CD8-positive, alpha-beta T cell (primary cell): ENCODE measurements at regions of chr14 and their contacts with region 1.

Region 1: GRCh38 chr14:50619556-50620141 is 48.5 kb downstream of the SAV1 start:
- DNase-seq: peak in 2 of 9 experiments; percentile 21 to 39
- ATAC-seq: no peak
- H3K4me3 ChIP-seq: no peak overlapping the region
- H3K4me3 Mint-ChIP-seq: no peak overlapping the region
- H3K27ac ChIP-seq: no peak overlapping the region
- H3K27ac Mint-ChIP-seq: no peak overlapping the region
- H3K4me1 ChIP-seq: no peaks in the 10 kb centered on the region
- H3K4me1 Mint-ChIP-seq: no peaks in the 10 kb centered on the region
- H3K27me3 ChIP-seq: no peaks in the 10 kb centered on the region
- H3K27me3 Mint-ChIP-seq: no peaks in the 10 kb centered on the region
- CTCF ChIP-seq: no peak

Region 2: GRCh38 chr14:50635141-50635540 is 15.5 kb after region 1 on chr14:
- CTCF ChIA-PET with region 1: no interaction called
- POLR2A ChIA-PET with region 1: no interaction called
- intact Hi-C with region 1: no loop called
- DNase-seq: no peak
- ATAC-seq: no peak
- H3K4me3 ChIP-seq: no peak overlapping the region
- H3K4me3 Mint-ChIP-seq: no peak overlapping the region
- H3K27ac ChIP-seq: no peak overlapping the region
- H3K27ac Mint-ChIP-seq: no peak overlapping the region
- H3K4me1 ChIP-seq: no peaks in the 10 kb centered on the region
- H3K4me1 Mint-ChIP-seq: no peaks in the 10 kb centered on the region
- H3K27me3 ChIP-seq: no peaks in the 10 kb centered on the region
- H3K27me3 Mint-ChIP-seq: no peaks in the 10 kb centered on the region
- CTCF ChIP-seq: no peak

Region 3: GRCh38 chr14:50647753-50648152 is 28.1 kb after region 1 on chr14:
- CTCF ChIA-PET with region 1: no interaction called
- POLR2A ChIA-PET with region 1: no interaction called
- intact Hi-C with region 1: loop called in 1 of 2 experiments (anchors 1 kb)
- DNase-seq: no peak
- ATAC-seq: no peak
- H3K4me3 ChIP-seq: no peak overlapping the region
- H3K4me3 Mint-ChIP-seq: no peak overlapping the region
- H3K27ac ChIP-seq: no peak overlapping the region
- H3K27ac Mint-ChIP-seq: no peak overlapping the region
- H3K4me1 ChIP-seq: no peaks in the 10 kb centered on the region
- H3K4me1 Mint-ChIP-seq: no peaks in the 10 kb centered on the region
- H3K27me3 ChIP-seq: no peaks in the 10 kb centered on the region
- H3K27me3 Mint-ChIP-seq: no peaks in the 10 kb centered on the region
- CTCF ChIP-seq: no peak

Region 4: GRCh38 chr14:50697659-50698290 is 78.1 kb after region 1 on chr14:
- CTCF ChIA-PET with region 1: no interaction called
- POLR2A ChIA-PET with region 1: no interaction called
- intact Hi-C with region 1: no loop called
- DNase-seq: no peak
- ATAC-seq: no peak
- H3K4me3 ChIP-seq: no peak overlapping the region
- H3K4me3 Mint-ChIP-seq: no peak overlapping the region
- H3K27ac ChIP-seq: no peak overlapping the region
- H3K27ac Mint-ChIP-seq: no peak overlapping the region
- H3K4me1 ChIP-seq: no peaks in the 10 kb centered on the region
- H3K4me1 Mint-ChIP-seq: no peaks in the 10 kb centered on the region
- H3K27me3 ChIP-seq: peaks cover 0 to 7% of the 10 kb centered on the region in 2 experiments
- H3K27me3 Mint-ChIP-seq: peaks cover 9% of the 10 kb centered on the region
- CTCF ChIP-seq: no peak